HEK293T (cell line): ENCODE measurements at regions of chr3 and their contacts with region 1.

Region 1: GRCh38 chr3:58217209-58217811 is 6.5 kb upstream of the DNASE1L3 start:
- DNase-seq: peak; percentile 76

Region 2: GRCh38 chr3:58009026-58009748 is 208.1 kb before region 1 on chr3:
- CTCF ChIA-PET with region 1: no interaction called
- POLR2A ChIA-PET with region 1: no interaction called
- DNase-seq: no peak

Region 3: GRCh38 chr3:58234516-58234931 is 17.2 kb after region 1 on chr3:
- CTCF ChIA-PET with region 1: interaction called, 13 read pairs
- POLR2A ChIA-PET with region 1: no interaction called
- DNase-seq: no peak